ENCODE measurements at regions of chr10 and their contacts with region 1.

Region 1: GRCh38 chr10:27143686-27144085 is 10.5 kb downstream of the YME1L1 start:
- DNase-seq: no peak
- H3K4me3 ChIP-seq: no peak overlapping the region
- H3K27ac ChIP-seq: no peak overlapping the region
- H3K4me1 ChIP-seq: no peaks in the 10 kb centered on the region
- H3K27me3 ChIP-seq: no peaks in the 10 kb centered on the region
- CTCF ChIP-seq: no peak

Region 2: GRCh38 chr10:27207350-27207749 is 63.7 kb after region 1 on chr10:
- CTCF ChIA-PET with region 1: no interaction called
- POLR2A ChIA-PET with region 1: interaction called, 10 read pairs
- intact Hi-C with region 1: no loop called
- DNase-seq: no peak
- H3K4me3 ChIP-seq: no peak overlapping the region
- H3K27ac ChIP-seq: no peak overlapping the region
- H3K4me1 ChIP-seq: no peaks in the 10 kb centered on the region
- H3K27me3 ChIP-seq: no peaks in the 10 kb centered on the region
- CTCF ChIP-seq: no peak